Dendritic cell treated with granulocyte-macrophage colony-stimulating factor and Interleukin-4, amounts not matched to agents 40 ng/mL and 50 ng/mL, for 4 days (primary cell): ENCODE measurements at regions of chr17 and their contacts with region 1.

Region 1: GRCh38 chr17:2087597-2088211 is 32.8 kb downstream of the HIC1 start:
- H3K4me3 Mint-ChIP-seq: peak overlapping the region; percentile 17
- H3K27ac Mint-ChIP-seq: peak overlapping the region; percentile 52
- H3K4me1 Mint-ChIP-seq: peaks cover 90% of the 10 kb centered on the region
- H3K27me3 Mint-ChIP-seq: peaks cover 66% of the 10 kb centered on the region

Region 2: GRCh38 chr17:2054512-2055291 is 33.0 kb before region 1 on chr17 and contains the start of gene HIC1:
- intact Hi-C with region 1: loop called (anchors 2 kb)
- H3K4me3 Mint-ChIP-seq: peak within 1 kb of the TSS; percentile 49
- H3K27ac Mint-ChIP-seq: no peak within 1 kb of the TSS
- H3K4me1 Mint-ChIP-seq: peaks cover 41% of the 10 kb centered on the region
- H3K27me3 Mint-ChIP-seq: peaks cover 52% of the 10 kb centered on the region

Region 3: DNA sequence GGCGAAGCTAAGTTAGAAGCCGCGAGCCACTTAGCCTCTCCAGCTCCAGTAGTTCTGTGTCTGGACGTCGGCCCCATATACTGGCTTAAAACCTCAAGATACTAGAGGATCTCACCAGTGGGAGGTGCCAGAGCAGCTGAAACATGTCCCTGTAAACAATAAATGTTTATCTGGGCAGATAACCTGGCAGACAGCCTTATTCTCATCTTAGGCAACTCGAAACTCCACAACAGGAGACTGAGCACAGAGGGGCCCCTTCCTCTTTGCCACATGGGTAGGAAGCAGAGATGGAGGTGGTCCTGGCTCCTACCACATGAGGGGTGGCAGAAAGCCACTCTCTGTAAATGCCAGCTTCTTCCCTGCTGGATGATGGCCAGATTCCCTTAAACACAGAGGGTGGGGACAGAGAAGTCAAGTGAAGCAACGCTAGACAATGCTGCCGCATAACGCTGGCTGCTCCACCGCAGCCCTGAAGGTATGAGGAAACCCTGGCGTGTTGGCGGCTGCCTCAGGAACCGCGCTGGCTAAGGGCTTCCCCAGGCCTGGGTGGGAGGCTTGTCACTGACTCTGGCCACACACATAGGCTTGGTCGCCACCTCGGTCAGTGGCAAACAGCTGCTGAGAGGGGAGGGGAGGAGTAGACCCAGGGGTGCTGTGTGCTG is 35.1 kb after region 1 on chr17:
- intact Hi-C with region 1: loop called (anchors 2 kb)
- H3K4me3 Mint-ChIP-seq: peak overlapping the region; percentile 62
- H3K27ac Mint-ChIP-seq: peak overlapping the region; percentile 90
- H3K4me1 Mint-ChIP-seq: peaks cover 65% of the 10 kb centered on the region
- H3K27me3 Mint-ChIP-seq: no peaks in the 10 kb centered on the region

Region 4: GRCh38 chr17:2137342-2138098 is 49.8 kb after region 1 on chr17:
- intact Hi-C with region 1: loop called (anchors 5 kb)
- H3K4me3 Mint-ChIP-seq: no peak overlapping the region
- H3K27ac Mint-ChIP-seq: peak overlapping the region; percentile 79
- H3K4me1 Mint-ChIP-seq: peaks cover 29% of the 10 kb centered on the region
- H3K27me3 Mint-ChIP-seq: no peaks in the 10 kb centered on the region

Region 5: GRCh38 chr17:2259769-2260536 is 172.2 kb after region 1 on chr17:
- intact Hi-C with region 1: no loop called
- H3K4me3 Mint-ChIP-seq: no peak overlapping the region
- H3K27ac Mint-ChIP-seq: no peak overlapping the region
- H3K4me1 Mint-ChIP-seq: no peaks in the 10 kb centered on the region
- H3K27me3 Mint-ChIP-seq: no peaks in the 10 kb centered on the region